Common myeloid progenitor, CD34-positive (primary cell): ENCODE measurements at regions of chr3 and their contacts with region 1.

Region 1: GRCh38 chr3:167740961-167741587 is 5.6 kb downstream of the SERPINI1 start:
- DNase-seq: peak; percentile 55 to 72 (median 69)
- H3K4me3 ChIP-seq: no peak overlapping the region
- H3K27ac ChIP-seq: no peak overlapping the region
- H3K4me1 ChIP-seq: peaks cover 0 to 15% (median 7%) of the 10 kb centered on the region in 4 experiments
- H3K27me3 ChIP-seq: no peaks in the 10 kb centered on the region

Region 2: GRCh38 chr3:167380004-167380689 is 360.9 kb before region 1 on chr3 and contains the start of gene ZBBX:
- CTCF ChIA-PET with region 1: interaction called, 10 read pairs
- POLR2A ChIA-PET with region 1: no interaction called
- DNase-seq: peak; percentile 83 to 93 (median 89)
- H3K4me3 ChIP-seq: peak within 1 kb of the TSS; percentile 52 to 82 (median 71)
- H3K27ac ChIP-seq: no peak within 1 kb of the TSS
- H3K4me1 ChIP-seq: peaks cover 0 to 6% (median 2%) of the 10 kb centered on the region in 4 experiments
- H3K27me3 ChIP-seq: no peaks in the 10 kb centered on the region

Region 3: DNA sequence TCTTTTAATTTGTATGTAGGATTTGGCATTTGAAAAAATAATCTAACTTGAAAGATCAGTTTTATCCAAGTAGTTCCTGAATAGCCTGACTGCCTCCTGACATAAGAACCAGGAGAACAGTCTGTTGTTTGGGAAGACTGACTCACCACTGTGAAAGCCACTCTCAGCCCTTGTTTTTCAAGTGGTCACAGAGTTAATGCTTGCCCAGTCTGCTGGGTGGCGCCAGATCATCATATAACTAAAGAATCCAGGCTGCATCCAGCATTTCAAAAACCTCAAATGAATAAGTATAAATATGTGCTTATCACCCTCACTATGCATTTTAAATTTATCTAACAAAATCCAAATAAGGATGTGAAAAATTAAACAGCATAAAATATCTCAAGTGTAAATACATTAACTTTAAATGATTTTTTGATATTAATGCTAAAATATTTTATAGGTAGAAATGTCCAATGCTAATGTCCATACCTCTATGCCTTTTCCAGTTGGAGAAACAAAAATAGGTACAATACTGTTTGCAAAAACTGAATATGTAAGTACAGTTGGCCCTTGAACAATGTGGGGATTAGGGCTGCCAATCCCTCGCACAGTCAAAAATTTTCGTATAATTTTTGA is 334.1 kb before region 1 on chr3:
- CTCF ChIA-PET with region 1: interaction called, 13 read pairs
- POLR2A ChIA-PET with region 1: no interaction called
- DNase-seq: peak; percentile 64 to 81 (median 79)
- H3K4me3 ChIP-seq: no peak overlapping the region
- H3K27ac ChIP-seq: no peak overlapping the region
- H3K4me1 ChIP-seq: no peaks in the 10 kb centered on the region
- H3K27me3 ChIP-seq: no peaks in the 10 kb centered on the region

Region 4: GRCh38 chr3:167684388-167684993 is 56.6 kb before region 1 on chr3:
- CTCF ChIA-PET with region 1: interaction called, 20 read pairs
- POLR2A ChIA-PET with region 1: no interaction called
- DNase-seq: peak; percentile 67 to 83 (median 72)
- H3K4me3 ChIP-seq: no peak overlapping the region
- H3K27ac ChIP-seq: no peak overlapping the region
- H3K4me1 ChIP-seq: no peaks in the 10 kb centered on the region
- H3K27me3 ChIP-seq: no peaks in the 10 kb centered on the region

Region 5: GRCh38 chr3:167691366-167691765 is 49.7 kb before region 1 on chr3:
- CTCF ChIA-PET with region 1: interaction called, 11 read pairs
- POLR2A ChIA-PET with region 1: no interaction called
- DNase-seq: peak; percentile 25 to 88 (median 76)
- H3K4me3 ChIP-seq: no peak overlapping the region
- H3K27ac ChIP-seq: no peak overlapping the region
- H3K4me1 ChIP-seq: peaks cover 0 to 5% (median 3%) of the 10 kb centered on the region in 4 experiments
- H3K27me3 ChIP-seq: no peaks in the 10 kb centered on the region